A549 (cell line): ENCODE measurements at regions of chr17 and their contacts with region 1.

Region 1: DNA sequence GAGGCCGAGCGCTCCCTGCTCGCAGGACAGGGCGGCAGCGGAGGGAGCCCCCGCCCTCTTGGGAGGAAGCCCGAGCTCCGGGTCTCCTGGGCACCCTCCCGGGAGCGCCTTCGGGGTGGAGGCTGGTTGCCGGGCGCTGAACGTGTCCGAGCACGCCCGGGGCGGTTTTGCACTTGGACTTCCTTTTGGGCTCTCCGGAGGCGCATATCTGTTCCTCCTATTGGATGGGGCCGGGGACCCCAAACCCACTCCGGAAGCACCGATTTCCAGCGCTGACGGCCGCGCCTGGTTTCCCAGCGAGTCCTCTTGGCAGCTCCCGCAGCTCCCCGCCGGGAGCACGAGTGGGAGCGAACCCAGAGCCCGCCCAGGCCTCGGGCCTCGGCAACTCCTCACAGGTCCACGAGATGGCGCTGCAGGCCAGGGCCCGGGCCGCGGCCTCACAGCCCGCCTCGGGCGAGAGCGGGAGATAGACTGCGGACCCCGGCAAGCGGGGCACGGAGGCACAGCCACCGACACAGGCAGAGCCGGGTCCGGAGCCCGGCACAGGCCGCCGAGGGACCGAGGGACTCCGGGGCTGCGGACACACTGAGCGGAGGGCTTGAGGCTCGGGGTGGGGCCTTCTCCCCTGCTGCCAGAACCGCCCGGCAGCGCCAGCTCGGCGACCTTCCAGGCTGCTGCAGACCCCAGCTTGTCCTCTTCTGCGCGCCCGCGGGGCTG is 12.7 kb downstream of the TBX2 start:
- DNase-seq: peak; percentile 82 to 90
- ATAC-seq: peak; percentile 55 to 80
- H3K4me3 ChIP-seq: peak overlapping the region; percentile 58
- H3K27ac ChIP-seq: peak overlapping the region; percentile 85 to 91
- H3K4me1 ChIP-seq: peaks cover 15% of the 10 kb centered on the region
- CTCF ChIP-seq: peak; percentile 99
- EP300 ChIP-seq: no peak
- POLR2A ChIP-seq: peak; percentile 47
- RAD21 ChIP-seq: peak; percentile 98 to 100

Region 2: GRCh38 chr17:60720763-60721531 is 691.4 kb before region 1 on chr17:
- CTCF ChIA-PET with region 1: interaction called, 29 read pairs
- POLR2A ChIA-PET with region 1: interaction called, 3 read pairs
- DNase-seq: peak; percentile 63 to 74
- ATAC-seq: peak; percentile 73 to 87; a peak in 5 of 6 replicates
- H3K4me3 ChIP-seq: no peak overlapping the region
- H3K27ac ChIP-seq: no peak overlapping the region
- H3K4me1 ChIP-seq: peaks cover 3% of the 10 kb centered on the region; the same call in 1 of the 3 replicates
- CTCF ChIP-seq: peak; percentile 99
- EP300 ChIP-seq: no peak
- POLR2A ChIP-seq: no peak
- RAD21 ChIP-seq: peak; percentile 96 to 97

Region 3: DNA sequence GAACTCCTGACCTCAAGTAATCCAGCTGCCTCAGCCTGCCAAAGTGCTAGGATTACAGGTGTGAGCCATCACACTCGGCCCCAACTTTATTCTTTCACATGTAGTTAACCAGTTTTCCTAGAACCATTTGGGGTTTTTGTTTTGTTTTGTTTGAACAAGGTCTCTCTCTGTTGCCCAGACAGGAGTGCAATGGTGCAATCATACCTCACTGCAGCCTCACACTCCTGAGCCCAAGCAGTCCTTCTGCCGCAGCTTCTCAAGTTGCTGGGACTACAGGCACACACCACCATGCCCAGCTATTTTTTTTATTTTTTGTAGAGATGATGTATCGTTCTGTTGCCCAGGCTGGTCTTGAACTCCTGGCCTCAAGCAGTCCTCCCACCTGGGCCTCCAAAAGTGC is 140.6 kb before region 1 on chr17:
- CTCF ChIA-PET with region 1: no interaction called
- POLR2A ChIA-PET with region 1: no interaction called
- DNase-seq: no peak
- ATAC-seq: no peak
- H3K4me3 ChIP-seq: no peak overlapping the region
- H3K27ac ChIP-seq: no peak overlapping the region
- H3K4me1 ChIP-seq: no peaks in the 10 kb centered on the region
- CTCF ChIP-seq: no peak
- EP300 ChIP-seq: no peak
- POLR2A ChIP-seq: no peak
- RAD21 ChIP-seq: no peak

Region 4: GRCh38 chr17:61366715-61367413 is 45.4 kb before region 1 on chr17:
- CTCF ChIA-PET with region 1: interaction called, 13 read pairs
- POLR2A ChIA-PET with region 1: no interaction called
- DNase-seq: no peak
- ATAC-seq: no peak
- H3K4me3 ChIP-seq: no peak overlapping the region
- H3K27ac ChIP-seq: no peak overlapping the region
- H3K4me1 ChIP-seq: 0 out of 3 replicates have a peak, but pooled peaks cover 5% of the 10 kb centered on the region
- CTCF ChIP-seq: no peak
- EP300 ChIP-seq: no peak
- POLR2A ChIP-seq: no peak
- RAD21 ChIP-seq: no peak

Region 5: GRCh38 chr17:61376931-61377838 is 35.1 kb before region 1 on chr17:
- CTCF ChIA-PET with region 1: no interaction called
- POLR2A ChIA-PET with region 1: no interaction called
- DNase-seq: no peak
- ATAC-seq: no peak
- H3K4me3 ChIP-seq: no peak overlapping the region
- H3K27ac ChIP-seq: no peak overlapping the region
- H3K4me1 ChIP-seq: no peaks in the 10 kb centered on the region
- CTCF ChIP-seq: no peak
- EP300 ChIP-seq: no peak
- POLR2A ChIP-seq: no peak
- RAD21 ChIP-seq: no peak

Region 6: GRCh38 chr17:61426013-61426730 is 13.9 kb after region 1 on chr17:
- CTCF ChIA-PET with region 1: interaction called, 61 read pairs
- POLR2A ChIA-PET with region 1: interaction called, 3 read pairs
- DNase-seq: peak in 1 of 2 experiments; percentile 69
- ATAC-seq: peak; percentile 55 to 78; a peak in 5 of 6 replicates
- H3K4me3 ChIP-seq: no peak overlapping the region
- H3K27ac ChIP-seq: peak overlapping the region; percentile 63 to 69
- H3K4me1 ChIP-seq: peaks cover 25% of the 10 kb centered on the region
- CTCF ChIP-seq: peak; percentile 41; the same call in 2 of the 3 replicates
- EP300 ChIP-seq: no peak
- POLR2A ChIP-seq: no peak
- RAD21 ChIP-seq: peak; percentile 45 to 79; a peak in 4 of 5 replicates

Region 7: DNA sequence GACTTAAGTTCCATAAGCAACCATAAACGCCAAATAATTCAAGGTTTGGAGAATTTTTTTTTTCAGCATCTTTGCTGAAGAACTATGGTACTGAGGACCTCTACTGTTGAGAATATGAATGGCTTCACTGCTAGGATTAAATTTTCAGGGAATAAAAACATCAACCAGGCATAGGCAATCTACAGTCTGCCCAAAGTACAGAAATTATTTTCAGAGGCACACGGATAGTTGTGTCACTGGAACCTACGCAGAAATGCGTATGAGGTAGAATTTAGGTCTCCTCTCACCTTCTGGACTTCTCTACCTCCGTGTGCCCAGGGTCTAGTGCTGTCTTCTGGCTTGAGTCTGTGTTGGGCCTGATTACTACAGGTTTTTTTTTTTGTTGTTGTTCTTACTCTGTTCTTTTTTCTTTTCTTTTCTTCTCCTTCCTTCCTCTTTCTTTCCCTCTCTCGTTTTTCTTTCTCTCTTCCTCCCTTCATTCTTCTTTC is 139.0 kb after region 1 on chr17:
- CTCF ChIA-PET with region 1: interaction called, 116 read pairs
- POLR2A ChIA-PET with region 1: no interaction called
- DNase-seq: peak; percentile 68 to 77
- ATAC-seq: peak; percentile 87 to 91; a peak in 5 of 6 replicates
- H3K4me3 ChIP-seq: no peak overlapping the region
- H3K27ac ChIP-seq: peak overlapping the region; percentile 69 to 70
- H3K4me1 ChIP-seq: peaks cover 18% of the 10 kb centered on the region
- CTCF ChIP-seq: peak; percentile 97
- EP300 ChIP-seq: no peak
- POLR2A ChIP-seq: no peak
- RAD21 ChIP-seq: peak; percentile 95 to 96

Region 8: DNA sequence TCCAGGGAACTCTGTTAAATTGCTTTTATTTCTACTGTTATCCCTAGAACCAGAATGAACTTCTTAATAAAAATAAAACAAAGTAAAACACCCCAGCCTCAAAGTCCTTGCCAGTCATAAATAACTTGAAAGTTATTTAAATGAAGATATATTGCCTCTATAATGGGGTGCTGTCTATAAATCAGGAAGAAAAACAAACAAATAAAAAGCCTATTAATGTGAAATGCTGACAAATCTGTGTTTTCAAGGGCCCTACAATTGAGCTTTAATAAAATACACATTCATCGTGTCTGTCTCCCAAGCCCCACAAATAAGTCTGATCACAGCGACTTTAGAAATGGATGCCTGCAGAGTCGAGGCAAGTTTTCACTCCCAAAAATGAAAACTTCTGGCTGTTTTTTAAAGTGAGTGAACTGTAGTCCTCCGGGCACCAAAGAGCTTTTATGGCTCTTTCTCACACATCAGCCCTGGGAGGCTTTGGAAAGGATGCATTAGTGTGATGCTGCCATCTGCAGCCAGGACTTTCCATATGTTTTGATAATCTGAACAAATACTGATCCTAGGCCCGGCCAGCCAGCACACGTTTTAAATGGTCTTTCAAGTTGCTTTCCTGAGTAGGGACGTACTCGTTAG is 162.4 kb after region 1 on chr17:
- CTCF ChIA-PET with region 1: interaction called, 357 read pairs
- POLR2A ChIA-PET with region 1: interaction called, 21 read pairs
- DNase-seq: peak; percentile 80 to 88
- ATAC-seq: peak; percentile 98 to 99
- H3K4me3 ChIP-seq: no peak overlapping the region
- H3K27ac ChIP-seq: peak overlapping the region; percentile 57 to 72
- H3K4me1 ChIP-seq: peaks cover 16% of the 10 kb centered on the region
- CTCF ChIP-seq: peak; percentile 89
- EP300 ChIP-seq: no peak
- POLR2A ChIP-seq: no peak
- RAD21 ChIP-seq: peak; percentile 98

Region 9: DNA sequence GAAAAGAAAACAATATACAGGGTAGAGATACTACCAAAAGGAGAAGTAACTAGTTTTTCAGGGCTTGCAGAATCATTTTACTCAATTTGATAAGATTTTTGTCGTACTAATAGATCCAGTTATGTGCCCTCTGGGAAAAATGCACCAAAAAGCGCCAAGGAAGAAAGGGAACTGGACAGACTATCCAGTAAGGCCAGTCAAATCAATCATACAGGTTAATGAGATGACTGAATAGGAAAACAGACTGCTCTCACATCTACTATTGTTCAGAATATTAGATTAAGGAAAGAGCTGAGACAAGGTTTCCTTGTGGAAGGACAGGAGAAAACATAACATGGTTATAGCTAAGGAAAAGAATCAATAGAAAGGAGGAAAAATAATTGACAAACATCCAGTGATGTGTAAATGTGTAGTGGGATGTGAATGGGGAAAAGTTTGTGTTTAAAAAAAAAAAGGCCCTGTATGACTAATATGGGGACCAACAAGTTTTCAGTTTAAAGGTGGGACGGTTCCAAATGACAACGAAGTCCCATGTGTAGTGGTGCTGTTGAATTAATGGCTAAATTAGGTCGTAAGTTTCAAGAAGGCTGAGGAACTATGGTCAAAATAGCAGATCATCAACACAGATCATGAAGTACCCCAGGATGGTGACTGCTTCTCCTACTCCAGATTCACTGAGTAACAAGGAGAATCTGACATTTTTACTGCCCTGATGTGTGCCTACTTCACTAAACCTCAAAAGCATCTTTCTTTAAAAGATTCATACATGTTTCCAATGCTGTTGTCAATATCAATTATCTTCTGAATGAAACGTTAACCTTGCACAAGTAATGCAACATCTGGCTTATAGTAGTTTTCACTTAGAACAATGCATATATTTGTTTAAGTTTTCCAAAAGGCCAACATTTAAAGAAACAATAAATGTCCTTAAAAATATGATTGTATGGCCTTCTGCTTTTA is 410.3 kb after region 1 on chr17:
- CTCF ChIA-PET with region 1: interaction called, 20 read pairs
- POLR2A ChIA-PET with region 1: no interaction called
- DNase-seq: no peak
- ATAC-seq: no peak
- H3K4me3 ChIP-seq: no peak overlapping the region
- H3K27ac ChIP-seq: no peak overlapping the region
- H3K4me1 ChIP-seq: no peaks in the 10 kb centered on the region
- CTCF ChIP-seq: no peak
- EP300 ChIP-seq: no peak
- POLR2A ChIP-seq: no peak
- RAD21 ChIP-seq: no peak